ENCODE measurements at regions of chr1 and their contacts with region 1.

Region 1: DNA sequence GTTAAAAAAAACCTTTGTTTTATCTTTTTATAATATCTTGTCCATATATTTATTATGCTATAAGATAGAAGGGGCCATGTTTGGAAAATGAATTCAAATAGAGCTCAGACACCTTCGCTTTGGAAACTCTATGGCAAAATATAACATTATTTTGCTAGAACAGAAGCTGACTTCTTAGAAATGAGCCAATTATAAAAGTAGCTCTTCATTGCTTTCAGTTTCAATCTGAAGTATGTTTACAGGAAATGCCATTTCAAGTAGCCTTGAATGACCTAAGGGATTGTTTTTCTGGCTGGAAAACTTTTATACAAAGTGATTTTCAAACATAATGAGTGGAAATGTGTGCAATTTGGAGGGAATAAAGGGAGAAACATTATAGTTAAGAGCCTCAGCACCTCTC is 37.8 kb upstream of the GBP5 start:
- DNase-seq: no peak
- ATAC-seq: peak; percentile 75
- H3K4me3 Mint-ChIP-seq: peak overlapping the region; percentile 60
- H3K27ac Mint-ChIP-seq: peak overlapping the region; percentile 90
- H3K4me1 Mint-ChIP-seq: peaks cover 39% of the 10 kb centered on the region
- H3K27me3 Mint-ChIP-seq: no peaks in the 10 kb centered on the region

Region 2: GRCh38 chr1:89261926-89262515 is 48.5 kb before region 1 on chr1:
- POLR2A ChIA-PET with region 1: interaction called, 13 read pairs
- DNase-seq: no peak
- ATAC-seq: no peak
- H3K4me3 Mint-ChIP-seq: peak overlapping the region; percentile 77
- H3K27ac Mint-ChIP-seq: peak overlapping the region; percentile 71
- H3K4me1 Mint-ChIP-seq: peaks cover 66% of the 10 kb centered on the region
- H3K27me3 Mint-ChIP-seq: no peaks in the 10 kb centered on the region

Region 3: GRCh38 chr1:89286549-89287180 is 23.8 kb before region 1 on chr1:
- POLR2A ChIA-PET with region 1: interaction called, 31 read pairs
- DNase-seq: no peak
- ATAC-seq: peak; percentile 88
- H3K4me3 Mint-ChIP-seq: peak overlapping the region; percentile 67
- H3K27ac Mint-ChIP-seq: peak overlapping the region; percentile 95
- H3K4me1 Mint-ChIP-seq: peaks cover 54% of the 10 kb centered on the region
- H3K27me3 Mint-ChIP-seq: no peaks in the 10 kb centered on the region

Region 4: GRCh38 chr1:89331890-89332289 is 21.4 kb after region 1 on chr1:
- POLR2A ChIA-PET with region 1: no interaction called
- DNase-seq: no peak
- ATAC-seq: no peak
- H3K4me3 Mint-ChIP-seq: no peak overlapping the region
- H3K27ac Mint-ChIP-seq: no peak overlapping the region
- H3K4me1 Mint-ChIP-seq: peaks cover 5% of the 10 kb centered on the region
- H3K27me3 Mint-ChIP-seq: no peaks in the 10 kb centered on the region